Natural killer cell (primary cell): ENCODE measurements at regions of chr18 and their contacts with region 1.

Region 1: DNA sequence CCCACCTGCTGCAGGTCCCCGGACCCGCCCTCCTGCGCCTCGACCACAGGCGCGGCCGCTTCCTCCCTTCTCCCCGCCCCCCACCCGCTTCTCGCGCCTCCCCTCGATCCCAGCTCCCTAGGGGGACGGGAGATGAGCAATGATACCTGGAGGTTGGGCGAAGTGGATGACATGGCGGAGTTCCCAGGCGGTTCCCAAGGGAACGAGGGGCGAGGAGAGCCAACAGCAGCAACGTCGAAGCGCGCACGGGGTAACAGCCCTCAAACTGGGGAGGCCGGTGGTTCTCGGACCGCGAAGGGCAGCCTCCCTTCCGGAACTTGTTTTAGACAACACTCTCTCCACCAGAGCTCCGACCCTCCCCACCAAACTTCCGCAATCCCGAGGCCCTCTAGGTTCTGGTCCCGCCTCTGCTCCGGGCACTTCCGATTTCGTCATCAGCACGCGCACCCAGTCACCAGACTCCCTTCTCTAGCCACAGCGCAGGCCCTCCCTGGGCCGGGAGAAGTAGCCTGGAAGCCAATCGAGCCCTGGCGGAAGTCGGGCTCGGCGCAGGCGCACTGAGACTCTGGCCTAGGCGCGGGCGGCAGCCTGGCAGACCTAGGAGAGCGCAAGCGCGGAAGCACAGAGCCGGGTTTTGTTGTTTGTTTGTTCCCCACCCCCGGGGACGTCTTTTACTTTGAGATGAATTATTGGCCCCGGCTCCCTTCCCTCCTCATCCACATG is at the start of gene VPS4B:
- DNase-seq: peak; percentile 100
- ATAC-seq: peak; percentile 93 to 98 (median 94)
- H3K4me3 ChIP-seq: peak within 1 kb of the TSS; percentile 96
- H3K4me3 Mint-ChIP-seq: peak within 1 kb of the TSS; percentile 96
- H3K27ac ChIP-seq: peak within 1 kb of the TSS; percentile 85
- H3K27ac Mint-ChIP-seq: peak within 1 kb of the TSS; percentile 97
- H3K4me1 ChIP-seq: peaks cover 13% of the 10 kb centered on the region
- H3K4me1 Mint-ChIP-seq: peaks cover 19 to 28% of the 10 kb centered on the region in 2 donors
- H3K27me3 ChIP-seq: no peaks in the 10 kb centered on the region
- H3K27me3 Mint-ChIP-seq: peaks cover 3 to 5% of the 10 kb centered on the region in 2 donors
- CTCF ChIP-seq: no peak
- total RNA-seq, gene VPS4B: 101 to 128 (median 107) TPM

Region 2: GRCh38 chr18:62245699-62246098 is 1176.5 kb before region 1 on chr18:
- intact Hi-C with region 1: no loop called
- DNase-seq: no peak
- ATAC-seq: no peak
- H3K4me3 ChIP-seq: no peak overlapping the region
- H3K4me3 Mint-ChIP-seq: no peak overlapping the region
- H3K27ac ChIP-seq: no peak overlapping the region
- H3K27ac Mint-ChIP-seq: no peak overlapping the region
- H3K4me1 ChIP-seq: no peaks in the 10 kb centered on the region
- H3K4me1 Mint-ChIP-seq: no peaks in the 10 kb centered on the region
- H3K27me3 ChIP-seq: no peaks in the 10 kb centered on the region
- H3K27me3 Mint-ChIP-seq: no peaks in the 10 kb centered on the region
- CTCF ChIP-seq: no peak

Region 3: DNA sequence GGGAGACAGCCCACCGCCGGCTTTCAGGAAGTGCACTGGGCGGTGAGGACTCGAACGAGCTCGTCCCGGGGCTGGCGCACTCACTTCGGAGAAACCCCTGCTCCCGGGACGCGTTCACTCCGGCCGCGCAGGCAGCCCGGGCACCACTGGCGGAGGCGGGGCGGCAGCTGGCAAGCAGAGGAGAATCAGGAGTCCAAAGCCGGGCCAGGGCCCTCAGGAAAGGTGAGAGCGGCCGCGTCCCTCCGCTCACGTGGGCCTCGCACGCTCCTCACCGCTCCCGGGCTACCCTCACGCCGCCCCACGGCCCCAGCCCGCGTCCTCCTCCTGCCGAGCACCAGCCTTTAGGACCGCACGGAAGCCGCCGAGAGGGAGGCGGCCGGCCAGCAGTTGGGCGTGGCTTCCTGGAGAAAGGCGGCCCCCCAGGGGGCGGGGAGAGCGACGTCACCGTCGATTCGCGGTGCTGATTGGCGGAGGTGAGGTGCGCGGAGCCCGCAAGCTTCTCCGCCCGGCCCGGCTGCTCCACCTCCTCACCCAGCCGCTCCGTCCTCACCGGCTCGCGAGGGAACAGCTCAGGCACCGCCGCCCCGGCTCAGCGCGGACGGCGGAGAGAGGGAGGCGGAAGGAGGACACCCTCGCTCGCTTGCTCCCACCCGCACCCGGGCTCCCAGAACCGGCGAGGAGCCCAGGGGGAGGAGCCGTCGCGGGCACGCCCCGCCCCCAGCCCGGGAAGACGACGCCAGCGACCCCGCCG is 899.6 kb before region 1 on chr18 and contains the start of gene ZCCHC2:
- intact Hi-C with region 1: loop called (anchors 5 kb)
- DNase-seq: peak; percentile 99
- ATAC-seq: peak; percentile 78 to 91 (median 81)
- H3K4me3 ChIP-seq: peak within 1 kb of the TSS; percentile 82
- H3K4me3 Mint-ChIP-seq: peak within 1 kb of the TSS; percentile 91
- H3K27ac ChIP-seq: peak within 1 kb of the TSS; percentile 91
- H3K27ac Mint-ChIP-seq: peak within 1 kb of the TSS; percentile 89 to 93
- H3K4me1 ChIP-seq: peaks cover 16% of the 10 kb centered on the region
- H3K4me1 Mint-ChIP-seq: peaks cover 23 to 28% of the 10 kb centered on the region in 2 donors
- H3K27me3 ChIP-seq: no peaks in the 10 kb centered on the region
- H3K27me3 Mint-ChIP-seq: peaks cover 0 to 7% of the 10 kb centered on the region in 2 donors
- CTCF ChIP-seq: no peak
- total RNA-seq, gene ZCCHC2: 50.4 to 81.2 (median 59.6) TPM

Region 4: DNA sequence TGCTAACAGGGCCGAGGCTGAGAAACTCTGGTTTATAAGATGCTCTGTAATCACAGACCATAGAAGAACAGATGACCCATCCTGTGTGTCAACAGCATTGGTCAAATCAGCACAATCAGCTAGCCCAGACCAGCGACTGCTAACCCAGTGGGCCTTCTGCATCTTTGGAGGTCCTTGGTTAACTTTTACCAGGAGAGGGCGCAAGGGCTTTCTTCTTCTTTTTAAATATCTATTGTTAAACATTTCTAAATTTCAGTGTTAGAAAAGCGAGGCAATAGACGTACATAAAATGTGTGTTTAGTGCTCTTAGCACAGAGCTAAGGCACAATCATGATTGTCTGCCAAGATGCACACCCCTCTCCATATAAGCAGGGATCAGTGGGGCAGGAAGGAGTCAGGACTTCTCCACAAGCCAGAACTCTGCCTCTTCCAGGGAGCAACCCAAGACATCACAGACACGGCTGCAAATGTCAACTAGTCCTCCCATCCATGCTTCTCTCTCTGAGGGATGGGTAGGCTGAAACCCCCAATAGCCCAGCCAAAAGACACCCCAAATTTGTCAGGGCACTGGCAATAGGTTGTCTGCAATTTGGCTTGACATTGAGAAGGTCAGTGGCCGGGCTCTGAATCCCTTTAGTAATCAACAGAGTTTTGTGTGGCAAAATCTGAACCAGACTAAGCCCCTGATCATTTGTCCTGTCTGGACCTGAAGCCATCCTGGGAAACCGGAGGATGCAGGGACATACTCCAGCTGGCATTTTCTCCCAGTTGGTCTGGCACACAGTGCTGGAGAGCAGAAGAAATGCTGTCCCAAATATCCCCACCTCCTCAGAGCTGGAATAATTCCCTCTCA is 290.9 kb before region 1 on chr18:
- intact Hi-C with region 1: loop called (anchors 5 kb)
- DNase-seq: peak; percentile 33 to 81
- ATAC-seq: peak; percentile 62 to 90 (median 71)
- H3K4me3 ChIP-seq: no peak overlapping the region
- H3K4me3 Mint-ChIP-seq: no peak overlapping the region
- H3K27ac ChIP-seq: peak overlapping the region; percentile 4
- H3K27ac Mint-ChIP-seq: peak overlapping the region in 1 of 2 donors; percentile 60
- H3K4me1 ChIP-seq: peaks cover 6% of the 10 kb centered on the region
- H3K4me1 Mint-ChIP-seq: peaks cover 18 to 32% of the 10 kb centered on the region in 2 donors
- H3K27me3 ChIP-seq: no peaks in the 10 kb centered on the region
- H3K27me3 Mint-ChIP-seq: no peaks in the 10 kb centered on the region
- CTCF ChIP-seq: peak; percentile 79

Region 5: DNA sequence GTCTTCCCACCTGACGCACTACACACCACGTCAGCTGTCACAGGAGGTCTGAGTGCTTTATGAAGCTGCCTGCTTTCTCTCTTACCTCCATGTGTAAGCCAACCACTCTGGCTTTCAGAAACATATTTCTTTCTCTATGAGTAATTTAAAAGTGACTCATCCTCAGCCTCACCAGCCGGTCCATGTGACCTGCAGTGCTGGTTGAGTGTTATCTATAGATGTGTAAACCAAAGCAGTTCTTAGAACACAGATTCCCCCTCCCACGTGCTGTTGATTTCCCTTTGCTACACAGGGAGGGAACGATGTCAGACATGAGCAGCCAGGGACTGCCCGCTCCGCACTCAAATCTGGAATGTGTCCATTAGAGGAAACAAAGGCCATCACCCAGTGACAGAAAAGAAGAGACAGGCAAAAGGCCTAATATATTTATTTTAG is 260.5 kb before region 1 on chr18:
- intact Hi-C with region 1: loop called (anchors 5 kb)
- DNase-seq: peak; percentile 70 to 92
- ATAC-seq: peak; percentile 83 to 90 (median 87)
- H3K4me3 ChIP-seq: no peak overlapping the region
- H3K4me3 Mint-ChIP-seq: peak overlapping the region; percentile 77
- H3K27ac ChIP-seq: peak overlapping the region; percentile 97
- H3K27ac Mint-ChIP-seq: peak overlapping the region; percentile 93 to 96
- H3K4me1 ChIP-seq: peaks cover 60% of the 10 kb centered on the region
- H3K4me1 Mint-ChIP-seq: peaks cover 57 to 61% of the 10 kb centered on the region in 2 donors
- H3K27me3 ChIP-seq: no peaks in the 10 kb centered on the region
- H3K27me3 Mint-ChIP-seq: no peaks in the 10 kb centered on the region
- CTCF ChIP-seq: no peak

Region 6: DNA sequence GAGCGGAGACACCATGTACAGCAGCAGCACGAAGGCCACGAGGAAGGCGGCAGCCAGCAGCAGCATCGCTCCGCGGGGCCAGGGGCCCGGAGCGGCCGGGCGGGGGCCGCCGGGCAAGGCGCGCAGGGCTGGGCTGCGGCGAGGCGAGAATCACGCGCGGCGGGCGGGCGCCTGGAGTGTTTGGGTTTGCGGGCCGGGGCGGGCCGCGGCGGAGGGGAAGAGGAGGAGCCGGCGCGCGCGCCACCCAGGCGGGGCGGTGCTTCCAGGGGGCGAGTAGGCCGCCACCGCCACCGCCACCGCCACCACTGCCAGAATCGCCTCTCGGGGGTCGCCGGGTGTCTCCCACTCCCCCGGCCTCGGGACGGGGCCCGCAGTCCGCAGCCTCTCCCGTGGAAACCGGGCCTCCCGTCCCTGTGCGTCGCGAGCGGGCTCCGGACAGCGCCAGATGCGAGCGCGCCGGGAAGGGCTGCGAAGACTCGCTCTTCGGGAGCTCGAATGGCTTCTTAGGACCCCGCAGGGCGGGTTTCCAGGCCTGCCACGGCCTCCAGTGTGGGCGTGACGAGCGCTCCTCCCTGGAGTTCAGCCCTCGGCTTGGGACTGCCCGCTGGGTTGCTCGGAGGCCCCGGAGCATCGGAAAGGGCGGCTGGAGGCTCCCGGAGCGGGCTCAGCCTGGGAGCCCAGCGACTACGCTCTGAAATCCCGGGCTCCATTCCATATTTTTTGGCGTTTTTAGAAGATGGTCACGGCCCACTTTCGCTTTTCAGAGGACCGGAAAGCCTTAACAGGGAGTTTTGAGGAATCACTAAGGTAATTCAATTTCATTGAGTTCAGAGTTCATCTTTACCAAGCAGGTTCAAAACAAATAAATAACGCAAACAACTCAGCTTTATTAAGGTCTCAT is 54.9 kb before region 1 on chr18 and contains the start of gene KDSR:
- intact Hi-C with region 1: loop called (anchors 1 kb)
- DNase-seq: peak; percentile 79 to 86
- ATAC-seq: peak; percentile 83 to 91 (median 87)
- H3K4me3 ChIP-seq: peak within 1 kb of the TSS; percentile 93
- H3K4me3 Mint-ChIP-seq: peak within 1 kb of the TSS; percentile 91
- H3K27ac ChIP-seq: peak within 1 kb of the TSS; percentile 78
- H3K27ac Mint-ChIP-seq: peak within 1 kb of the TSS; percentile 50 to 69
- H3K4me1 ChIP-seq: peaks cover 30% of the 10 kb centered on the region
- H3K4me1 Mint-ChIP-seq: peaks cover 46 to 48% of the 10 kb centered on the region in 2 donors
- H3K27me3 ChIP-seq: no peaks in the 10 kb centered on the region
- H3K27me3 Mint-ChIP-seq: peaks cover 7 to 14% of the 10 kb centered on the region in 2 donors
- CTCF ChIP-seq: no peak
- total RNA-seq, gene KDSR: 11.1 to 15.1 (median 11.6) TPM

Region 7: DNA sequence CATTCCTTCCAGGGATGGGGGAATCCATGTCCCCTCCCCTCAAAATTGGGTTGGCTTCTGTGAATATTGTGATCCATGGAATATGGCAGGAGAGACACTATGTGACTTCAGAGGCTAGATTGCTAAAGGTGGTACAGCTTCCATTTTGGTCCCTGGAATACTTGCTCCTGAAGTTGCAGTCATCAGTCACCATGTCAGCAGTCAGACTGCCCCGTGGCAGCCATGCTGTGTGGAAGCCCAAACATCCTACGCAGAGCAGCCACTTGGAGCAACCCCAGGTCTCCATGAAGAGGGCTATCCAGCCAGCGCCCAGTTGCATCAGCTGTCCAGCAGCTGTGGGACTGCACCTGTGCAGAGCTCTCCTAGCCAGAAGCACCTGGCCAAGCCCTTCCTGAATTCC is 39.4 kb before region 1 on chr18:
- intact Hi-C with region 1: no loop called
- DNase-seq: no peak
- ATAC-seq: no peak
- H3K4me3 ChIP-seq: no peak overlapping the region
- H3K4me3 Mint-ChIP-seq: no peak overlapping the region
- H3K27ac ChIP-seq: no peak overlapping the region
- H3K27ac Mint-ChIP-seq: no peak overlapping the region
- H3K4me1 ChIP-seq: no peaks in the 10 kb centered on the region
- H3K4me1 Mint-ChIP-seq: peaks cover 7 to 9% of the 10 kb centered on the region in 2 donors
- H3K27me3 ChIP-seq: no peaks in the 10 kb centered on the region
- H3K27me3 Mint-ChIP-seq: no peaks in the 10 kb centered on the region
- CTCF ChIP-seq: no peak

Region 8: GRCh38 chr18:63402246-63403162 is 19.7 kb before region 1 on chr18:
- intact Hi-C with region 1: loop called (anchors 1 kb)
- DNase-seq: no peak
- ATAC-seq: no peak
- H3K4me3 ChIP-seq: no peak overlapping the region
- H3K4me3 Mint-ChIP-seq: no peak overlapping the region
- H3K27ac ChIP-seq: no peak overlapping the region
- H3K27ac Mint-ChIP-seq: peak overlapping the region in 1 of 2 donors; percentile 36
- H3K4me1 ChIP-seq: no peaks in the 10 kb centered on the region
- H3K4me1 Mint-ChIP-seq: peaks cover 0 to 24% of the 10 kb centered on the region in 2 donors
- H3K27me3 ChIP-seq: no peaks in the 10 kb centered on the region
- H3K27me3 Mint-ChIP-seq: no peaks in the 10 kb centered on the region
- CTCF ChIP-seq: no peak

Region 9: DNA sequence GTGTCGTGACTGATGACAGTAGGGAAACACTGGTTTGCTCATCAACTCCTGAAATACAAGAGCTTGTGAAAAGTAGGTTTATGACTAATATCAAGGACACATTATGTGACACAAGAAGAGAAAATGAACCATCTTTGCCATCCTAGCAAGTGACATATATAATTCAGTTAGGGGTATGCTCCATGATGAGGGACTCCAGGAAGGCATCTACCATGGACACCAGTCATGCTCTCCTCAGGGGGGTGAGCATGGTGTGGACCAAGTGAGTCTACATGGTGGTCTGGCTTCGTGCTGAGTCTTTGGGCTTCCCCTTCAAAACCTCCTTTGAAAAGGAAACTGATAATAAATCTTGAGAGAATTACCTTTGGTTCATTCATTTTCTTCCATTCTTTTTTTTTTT is 42.8 kb after region 1 on chr18:
- intact Hi-C with region 1: no loop called
- DNase-seq: no peak
- ATAC-seq: no peak
- H3K4me3 ChIP-seq: no peak overlapping the region
- H3K4me3 Mint-ChIP-seq: no peak overlapping the region
- H3K27ac ChIP-seq: no peak overlapping the region
- H3K27ac Mint-ChIP-seq: no peak overlapping the region
- H3K4me1 ChIP-seq: no peaks in the 10 kb centered on the region
- H3K4me1 Mint-ChIP-seq: no peaks in the 10 kb centered on the region
- H3K27me3 ChIP-seq: peaks cover 2% of the 10 kb centered on the region
- H3K27me3 Mint-ChIP-seq: peaks cover 10 to 17% of the 10 kb centered on the region in 2 donors
- CTCF ChIP-seq: no peak

Region 10: DNA sequence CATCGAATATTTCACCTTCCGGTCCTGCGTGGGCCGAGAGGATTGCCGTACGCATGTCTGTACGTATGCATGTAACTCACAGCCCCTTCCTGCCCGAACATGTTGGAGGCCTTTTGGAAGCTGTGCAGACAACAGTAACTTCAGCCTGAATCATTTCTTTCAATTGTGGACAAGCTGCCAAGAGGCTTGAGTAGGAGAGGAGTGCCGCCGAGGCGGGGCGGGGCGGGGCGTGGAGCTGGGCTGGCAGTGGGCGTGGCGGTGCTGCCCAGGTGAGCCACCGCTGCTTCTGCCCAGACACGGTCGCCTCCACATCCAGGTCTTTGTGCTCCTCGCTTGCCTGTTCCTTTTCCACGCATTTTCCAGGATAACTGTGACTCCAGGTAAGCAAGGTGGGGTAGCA is 54.4 kb after region 1 on chr18 and contains the start of gene SERPINB5:
- intact Hi-C with region 1: no loop called
- DNase-seq: no peak
- ATAC-seq: no peak
- H3K4me3 ChIP-seq: no peak within 1 kb of the TSS
- H3K4me3 Mint-ChIP-seq: no peak within 1 kb of the TSS
- H3K27ac ChIP-seq: no peak within 1 kb of the TSS
- H3K27ac Mint-ChIP-seq: no peak within 1 kb of the TSS
- H3K4me1 ChIP-seq: no peaks in the 10 kb centered on the region
- H3K4me1 Mint-ChIP-seq: no peaks in the 10 kb centered on the region
- H3K27me3 ChIP-seq: no peaks in the 10 kb centered on the region
- H3K27me3 Mint-ChIP-seq: peaks cover 6 to 13% of the 10 kb centered on the region in 2 donors
- CTCF ChIP-seq: no peak
- total RNA-seq, gene SERPINB5: not detected